CD4-positive, alpha-beta memory T cell (primary cell): ENCODE measurements at regions of chr10 and their contacts with region 1.

Region 1: DNA sequence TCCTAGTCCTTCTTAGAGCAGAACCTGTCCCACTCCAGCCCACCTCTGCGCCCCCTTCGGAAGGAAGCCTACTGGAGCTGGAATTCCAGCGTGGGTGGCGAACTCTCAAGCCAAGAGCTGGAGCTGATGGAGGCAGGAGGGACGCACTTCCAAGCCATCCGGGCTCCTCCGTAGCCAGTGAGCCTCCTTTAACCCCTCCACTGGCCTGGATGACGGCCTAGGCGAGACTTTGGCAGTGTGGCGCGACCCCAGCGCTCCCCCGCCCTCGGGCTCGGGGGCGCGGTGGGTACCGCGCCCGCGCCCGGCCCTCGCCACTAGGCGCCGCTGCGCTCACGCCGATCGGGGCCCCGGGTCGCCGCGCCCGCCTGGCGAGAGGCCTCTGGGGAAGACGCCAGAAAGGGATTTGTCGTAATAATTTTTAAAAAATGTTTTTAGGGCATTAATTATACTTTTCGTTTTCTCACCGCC is 5.1 kb upstream of the EMX2 start:
- DNase-seq: no peak
- H3K4me3 ChIP-seq: no peak overlapping the region
- H3K4me3 Mint-ChIP-seq: no peak overlapping the region
- H3K27ac ChIP-seq: no peak overlapping the region
- H3K27ac Mint-ChIP-seq: no peak overlapping the region
- H3K4me1 ChIP-seq: no peaks in the 10 kb centered on the region
- H3K4me1 Mint-ChIP-seq: peaks cover 5 to 20% (median 19%) of the 10 kb centered on the region in 4 donors
- H3K27me3 ChIP-seq: peaks cover 39% of the 10 kb centered on the region
- H3K27me3 Mint-ChIP-seq: peaks cover 41 to 49% of the 10 kb centered on the region in 2 donors

Region 2: GRCh38 chr10:118241229-118242137 is 704.0 kb after region 1 on chr10:
- CTCF ChIA-PET with region 1: interaction called, 12 read pairs
- POLR2A ChIA-PET with region 1: no interaction called
- intact Hi-C with region 1: loop called (anchors 2 kb)
- DNase-seq: peak in 4 of 5 donors; percentile 32 to 55 (median 46)
- H3K4me3 ChIP-seq: no peak overlapping the region
- H3K4me3 Mint-ChIP-seq: no peak overlapping the region
- H3K27ac ChIP-seq: no peak overlapping the region
- H3K27ac Mint-ChIP-seq: no peak overlapping the region
- H3K4me1 ChIP-seq: no peaks in the 10 kb centered on the region
- H3K4me1 Mint-ChIP-seq: peaks cover 0 to 1% (median 0%) of the 10 kb centered on the region in 4 donors
- H3K27me3 ChIP-seq: peaks cover 10% of the 10 kb centered on the region
- H3K27me3 Mint-ChIP-seq: peaks cover 30 to 40% of the 10 kb centered on the region in 2 donors